ENCODE measurements at regions of chr21 and their contacts with region 1.

Region 1: GRCh38 chr21:30044445-30045064 is 104.8 kb upstream of the GRIK1 start:
- DNase-seq: no peak
- ATAC-seq: no peak
- H3K4me3 ChIP-seq: no peak overlapping the region
- H3K27ac ChIP-seq: no peak overlapping the region
- H3K4me1 ChIP-seq: no peaks in the 10 kb centered on the region
- H3K27me3 ChIP-seq: no peaks in the 10 kb centered on the region
- CTCF ChIP-seq: peak; percentile 63 to 69 (median 64)
- EP300 ChIP-seq: no peak
- POLR2A ChIP-seq: no peak
- RAD21 ChIP-seq: peak; percentile 48

Region 2: GRCh38 chr21:30058928-30059327 is 14.4 kb after region 1 on chr21:
- CTCF ChIA-PET with region 1: interaction called, 10 read pairs
- POLR2A ChIA-PET with region 1: no interaction called
- RAD21 ChIA-PET with region 1: no interaction called
- SMC1A ChIA-PET with region 1: interaction called, 4 read pairs
- in situ Hi-C with region 1: no loop called
- intact Hi-C with region 1: no loop called
- DNase-seq: no peak
- ATAC-seq: no peak
- H3K4me3 ChIP-seq: no peak overlapping the region
- H3K27ac ChIP-seq: no peak overlapping the region
- H3K4me1 ChIP-seq: no peaks in the 10 kb centered on the region
- H3K27me3 ChIP-seq: no peaks in the 10 kb centered on the region
- CTCF ChIP-seq: no peak
- EP300 ChIP-seq: no peak
- POLR2A ChIP-seq: no peak
- RAD21 ChIP-seq: no peak

Region 3: GRCh38 chr21:30194701-30195299 is 150.2 kb after region 1 on chr21:
- CTCF ChIA-PET with region 1: interaction called, 21 read pairs
- POLR2A ChIA-PET with region 1: no interaction called
- RAD21 ChIA-PET with region 1: no interaction called
- SMC1A ChIA-PET with region 1: no interaction called
- in situ Hi-C with region 1: no loop called
- intact Hi-C with region 1: loop called (anchors 5 kb)
- DNase-seq: no peak
- ATAC-seq: peak; percentile 63; the same call in 2 of the 3 replicates
- H3K4me3 ChIP-seq: no peak overlapping the region
- H3K27ac ChIP-seq: no peak overlapping the region
- H3K4me1 ChIP-seq: no peaks in the 10 kb centered on the region
- H3K27me3 ChIP-seq: no peaks in the 10 kb centered on the region
- CTCF ChIP-seq: peak; percentile 15 to 34 (median 31); a peak in 3 of 6 replicates
- EP300 ChIP-seq: no peak
- POLR2A ChIP-seq: no peak
- RAD21 ChIP-seq: no peak

Region 4: GRCh38 chr21:30251781-30252180 is 207.2 kb after region 1 on chr21:
- CTCF ChIA-PET with region 1: no interaction called
- POLR2A ChIA-PET with region 1: no interaction called
- RAD21 ChIA-PET with region 1: no interaction called
- SMC1A ChIA-PET with region 1: no interaction called
- in situ Hi-C with region 1: no loop called
- intact Hi-C with region 1: no loop called
- DNase-seq: no peak
- ATAC-seq: no peak
- H3K4me3 ChIP-seq: no peak overlapping the region
- H3K27ac ChIP-seq: no peak overlapping the region
- H3K4me1 ChIP-seq: no peaks in the 10 kb centered on the region
- H3K27me3 ChIP-seq: no peaks in the 10 kb centered on the region
- CTCF ChIP-seq: no peak
- EP300 ChIP-seq: no peak
- POLR2A ChIP-seq: no peak
- RAD21 ChIP-seq: no peak